Activated T-helper 1 cell treated with anti-CD3 and anti-CD28 coated beads, Interleukin-12 subunit alpha, Interleukin-12 subunit beta, Interleukin-2, Interleukin-4 antibody, amounts not matched to agents 30 ng/mL and 10 ng/mL and 1 ng/mL, durations not matched to agents 14 hours and 24 hours and 36 hours (primary cell): ENCODE measurements at regions of chr20 and their contacts with region 1.

Region 1: GRCh38 chr20:8131598-8132483 is at the start of gene PLCB1:
- DNase-seq: peak; percentile 59
- H3K4me3 Mint-ChIP-seq: peak within 1 kb of the TSS; percentile 75
- H3K27ac Mint-ChIP-seq: no peak within 1 kb of the TSS
- H3K4me1 Mint-ChIP-seq: peaks cover 5% of the 10 kb centered on the region
- H3K27me3 Mint-ChIP-seq: peaks cover 31% of the 10 kb centered on the region
- total RNA-seq, gene PLCB1: 3.2 and 5.3 TPM in 2 replicates

Region 2: GRCh38 chr20:7866285-7866684 is 265.6 kb before region 1 on chr20:
- intact Hi-C with region 1: no loop called
- DNase-seq: no peak
- H3K4me3 Mint-ChIP-seq: no peak overlapping the region
- H3K27ac Mint-ChIP-seq: no peak overlapping the region
- H3K4me1 Mint-ChIP-seq: no peaks in the 10 kb centered on the region
- H3K27me3 Mint-ChIP-seq: no peaks in the 10 kb centered on the region

Region 3: GRCh38 chr20:8019246-8019997 is 112.4 kb before region 1 on chr20 and contains the start of gene TMX4:
- intact Hi-C with region 1: loop called (anchors 5 kb)
- DNase-seq: peak; percentile 88
- H3K4me3 Mint-ChIP-seq: peak within 1 kb of the TSS; percentile 91
- H3K27ac Mint-ChIP-seq: peak within 1 kb of the TSS; percentile 89
- H3K4me1 Mint-ChIP-seq: peaks cover 39% of the 10 kb centered on the region
- H3K27me3 Mint-ChIP-seq: peaks cover 5% of the 10 kb centered on the region
- total RNA-seq, gene TMX4: 30.4 and 31.3 TPM in 2 replicates

Region 4: GRCh38 chr20:8115391-8115790 is 16.4 kb before region 1 on chr20:
- intact Hi-C with region 1: no loop called
- DNase-seq: no peak
- H3K4me3 Mint-ChIP-seq: no peak overlapping the region
- H3K27ac Mint-ChIP-seq: no peak overlapping the region
- H3K4me1 Mint-ChIP-seq: no peaks in the 10 kb centered on the region
- H3K27me3 Mint-ChIP-seq: peaks cover 2% of the 10 kb centered on the region

Region 5: GRCh38 chr20:8156235-8157079 is 24.6 kb after region 1 on chr20:
- intact Hi-C with region 1: loop called (anchors 2 kb)
- DNase-seq: no peak
- H3K4me3 Mint-ChIP-seq: no peak overlapping the region
- H3K27ac Mint-ChIP-seq: no peak overlapping the region
- H3K4me1 Mint-ChIP-seq: peaks cover 48% of the 10 kb centered on the region
- H3K27me3 Mint-ChIP-seq: no peaks in the 10 kb centered on the region

Region 6: GRCh38 chr20:8203366-8203765 is 71.5 kb after region 1 on chr20:
- intact Hi-C with region 1: no loop called
- DNase-seq: no peak
- H3K4me3 Mint-ChIP-seq: no peak overlapping the region
- H3K27ac Mint-ChIP-seq: no peak overlapping the region
- H3K4me1 Mint-ChIP-seq: no peaks in the 10 kb centered on the region
- H3K27me3 Mint-ChIP-seq: peaks cover 9% of the 10 kb centered on the region

Region 7: DNA sequence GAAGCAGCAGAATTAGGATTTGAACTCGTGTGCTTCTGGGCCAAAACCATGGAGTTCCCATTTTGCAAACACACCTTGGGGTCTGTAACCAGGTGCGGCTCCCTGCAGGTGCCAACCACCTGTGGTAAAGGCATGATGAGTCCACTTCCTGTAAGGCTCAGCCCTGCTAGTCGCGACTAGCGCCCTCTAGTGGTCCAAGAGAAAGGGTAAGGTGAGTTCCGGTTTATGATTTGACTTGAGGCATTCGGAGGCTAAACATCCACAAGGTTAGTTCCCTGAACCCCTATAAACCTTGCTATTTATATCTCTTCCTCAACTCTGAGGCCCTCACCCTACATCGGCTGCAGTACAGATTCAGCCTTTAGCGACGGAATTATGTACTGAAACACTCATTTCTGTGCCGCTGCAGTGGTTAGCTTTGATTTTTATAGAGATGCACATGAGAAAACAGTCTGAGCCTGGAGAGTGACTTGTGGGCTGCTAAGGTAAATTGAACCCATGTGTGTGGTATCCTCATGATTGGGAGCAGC is 173.7 kb after region 1 on chr20:
- intact Hi-C with region 1: loop called (anchors 1 kb)
- DNase-seq: peak; percentile 52
- H3K4me3 Mint-ChIP-seq: no peak overlapping the region
- H3K27ac Mint-ChIP-seq: no peak overlapping the region
- H3K4me1 Mint-ChIP-seq: no peaks in the 10 kb centered on the region
- H3K27me3 Mint-ChIP-seq: no peaks in the 10 kb centered on the region

Region 8: DNA sequence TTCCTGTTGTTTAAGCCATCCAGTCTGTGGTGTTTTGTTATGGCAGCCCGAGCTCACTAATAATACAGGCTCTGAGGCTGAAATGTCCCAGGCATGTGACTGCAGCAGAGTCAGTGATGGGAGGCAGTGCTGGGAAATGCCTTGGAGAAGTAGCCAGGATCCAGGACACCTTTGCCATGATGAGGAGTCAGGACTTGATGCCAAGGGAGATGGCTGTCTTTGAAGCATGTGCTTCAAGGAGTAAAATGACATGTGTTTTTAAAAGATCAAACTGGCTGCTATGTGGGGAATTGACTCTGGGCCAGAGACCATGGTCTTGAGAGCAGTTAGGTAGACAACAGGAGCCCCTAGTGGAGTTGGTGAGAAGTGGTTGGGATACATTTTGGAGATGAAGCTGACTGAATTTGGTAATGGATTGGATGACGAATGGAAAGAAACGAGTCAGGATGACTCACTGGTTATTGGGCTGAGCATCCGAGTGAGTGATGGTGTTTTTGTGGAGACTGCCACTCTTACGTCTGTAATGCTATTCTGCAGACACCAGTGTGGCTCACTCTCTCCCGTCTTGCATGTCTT is 322.4 kb after region 1 on chr20:
- intact Hi-C with region 1: loop called (anchors 1 kb)
- DNase-seq: no peak
- H3K4me3 Mint-ChIP-seq: no peak overlapping the region
- H3K27ac Mint-ChIP-seq: no peak overlapping the region
- H3K4me1 Mint-ChIP-seq: peaks cover 7% of the 10 kb centered on the region
- H3K27me3 Mint-ChIP-seq: no peaks in the 10 kb centered on the region

Region 9: GRCh38 chr20:8722276-8722928 is 590.6 kb after region 1 on chr20:
- intact Hi-C with region 1: loop called (anchors 1 kb)
- DNase-seq: no peak
- H3K4me3 Mint-ChIP-seq: no peak overlapping the region
- H3K27ac Mint-ChIP-seq: no peak overlapping the region
- H3K4me1 Mint-ChIP-seq: no peaks in the 10 kb centered on the region
- H3K27me3 Mint-ChIP-seq: no peaks in the 10 kb centered on the region